Activated CD4-positive, alpha-beta T cell treated with anti-CD3 and anti-CD28 coated beads, Interleukin-2, amount 10 ng/mL, durations not matched to agents 7 days and 5 days (primary cell): ENCODE measurements at regions of chr3 and their contacts with region 1.

Region 1: GRCh38 chr3:184227481-184227935 is 1.9 kb upstream of the VWA5B2 start:
- DNase-seq: peak; percentile 59
- H3K4me3 Mint-ChIP-seq: no peak overlapping the region
- H3K27ac Mint-ChIP-seq: no peak overlapping the region
- H3K4me1 Mint-ChIP-seq: peaks cover 10% of the 10 kb centered on the region
- H3K27me3 Mint-ChIP-seq: peaks cover 56% of the 10 kb centered on the region

Region 2: DNA sequence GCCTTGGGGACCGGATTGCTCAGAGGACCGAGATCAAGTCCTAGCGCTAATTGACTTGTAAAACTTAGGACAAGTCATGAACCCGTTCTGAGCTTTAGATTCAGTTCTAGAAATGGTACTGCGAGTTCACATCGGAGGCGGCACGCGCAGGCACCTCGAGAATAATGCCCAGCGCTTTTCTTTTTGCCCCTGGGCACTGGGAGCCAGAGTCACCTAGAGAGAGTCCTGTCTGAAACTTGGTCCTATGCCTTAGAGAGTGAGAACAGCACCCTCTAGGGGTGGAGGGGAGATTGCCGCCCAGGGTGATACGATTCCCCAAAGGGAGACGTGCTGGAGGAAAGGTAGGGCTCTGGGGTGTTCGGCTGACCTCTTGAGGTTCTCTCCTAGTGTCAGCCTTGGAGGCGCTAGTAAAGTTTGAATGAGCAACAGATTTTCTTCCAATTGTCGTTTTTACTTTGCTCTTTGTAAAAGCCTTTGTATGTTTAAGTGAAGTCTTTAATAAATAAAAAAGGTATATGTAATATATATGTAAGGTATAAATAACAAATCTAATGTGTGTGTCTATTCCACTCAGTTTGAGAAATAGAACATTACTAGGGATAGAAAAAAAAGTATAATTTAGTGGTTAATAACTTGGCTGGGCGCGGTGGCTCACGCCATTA is 22.8 kb after region 1 on chr3:
- CTCF ChIA-PET with region 1: interaction called, 14 read pairs
- POLR2A ChIA-PET with region 1: no interaction called
- DNase-seq: peak; percentile 92
- H3K4me3 Mint-ChIP-seq: peak overlapping the region; percentile 91
- H3K27ac Mint-ChIP-seq: peak overlapping the region; percentile 97
- H3K4me1 Mint-ChIP-seq: peaks cover 13% of the 10 kb centered on the region
- H3K27me3 Mint-ChIP-seq: no peaks in the 10 kb centered on the region

Region 3: GRCh38 chr3:184255291-184256039 is 28.0 kb after region 1 on chr3:
- CTCF ChIA-PET with region 1: interaction called, 13 read pairs
- POLR2A ChIA-PET with region 1: no interaction called
- DNase-seq: no peak
- H3K4me3 Mint-ChIP-seq: no peak overlapping the region
- H3K27ac Mint-ChIP-seq: no peak overlapping the region
- H3K4me1 Mint-ChIP-seq: peaks cover 7% of the 10 kb centered on the region
- H3K27me3 Mint-ChIP-seq: peaks cover 15% of the 10 kb centered on the region